ENCODE measurements at regions of chr1 and their contacts with region 1.

Region 1: DNA sequence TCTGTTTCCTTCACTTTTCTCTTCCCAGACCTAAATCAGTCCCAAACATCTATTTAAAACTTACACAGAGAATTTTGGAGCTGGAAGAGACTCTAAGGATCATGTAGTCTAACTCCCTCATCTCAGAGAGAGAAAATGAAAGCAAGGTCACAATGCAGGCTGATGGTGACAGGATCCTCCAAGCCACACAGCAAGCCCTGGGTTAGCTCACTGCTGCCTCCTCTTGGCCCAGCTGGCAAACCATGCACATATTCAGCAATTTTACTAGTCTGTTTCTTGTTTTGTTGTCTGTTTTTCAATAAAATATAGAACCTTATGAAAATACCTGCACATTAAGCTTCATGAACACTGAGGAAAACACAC is 27.7 kb upstream of the LY9 start:
- DNase-seq: peak; percentile 94
- ATAC-seq: peak; percentile 80
- H3K4me3 Mint-ChIP-seq: peak overlapping the region; percentile 78
- H3K27ac Mint-ChIP-seq: peak overlapping the region; percentile 92
- H3K4me1 Mint-ChIP-seq: peaks cover 51% of the 10 kb centered on the region
- H3K27me3 Mint-ChIP-seq: no peaks in the 10 kb centered on the region
- CTCF ChIP-seq: peak; percentile 89

Region 2: DNA sequence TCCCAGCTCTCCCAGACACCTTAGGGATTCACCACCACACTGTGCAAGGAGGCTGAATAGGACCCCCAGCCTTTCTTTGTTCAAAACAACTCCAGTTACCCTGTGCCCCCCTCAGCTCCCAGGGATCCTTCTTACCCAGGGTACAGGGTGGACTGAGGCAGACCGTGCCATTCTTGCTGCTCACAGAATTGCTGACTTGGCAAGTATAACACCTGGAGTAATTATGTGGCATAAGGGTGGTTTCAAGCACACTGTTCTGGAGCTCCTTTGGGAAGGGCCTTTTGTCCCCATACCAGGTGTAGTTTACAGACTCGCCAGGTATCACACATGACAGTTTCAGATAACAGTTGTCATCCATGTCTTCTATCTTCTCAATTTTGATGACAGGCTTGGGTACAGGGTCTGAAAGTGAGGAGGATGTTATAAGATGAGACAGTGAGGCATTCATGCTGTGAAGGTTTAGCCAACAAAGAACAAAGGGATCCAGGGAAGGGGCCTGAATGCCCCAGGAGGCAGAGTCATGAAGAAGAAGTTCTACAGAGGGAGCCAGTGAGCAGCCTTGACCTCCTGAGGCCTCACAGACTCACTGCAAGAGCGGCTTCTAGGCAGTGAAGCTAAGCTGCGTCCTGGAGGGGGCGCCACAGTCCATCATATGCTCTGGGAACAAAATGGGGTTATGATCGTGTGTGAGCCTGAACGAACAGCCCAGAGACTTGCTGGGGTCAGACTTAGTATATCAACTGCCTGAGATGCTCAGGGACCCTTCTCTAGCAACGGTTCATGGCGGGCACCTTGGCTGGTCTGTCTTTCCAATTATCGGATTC is 87.0 kb before region 1 on chr1:
- CTCF ChIA-PET with region 1: interaction called, 42 read pairs
- POLR2A ChIA-PET with region 1: interaction called, 4 read pairs
- intact Hi-C with region 1: loop called (anchors 2 kb)
- DNase-seq: peak; percentile 96
- ATAC-seq: peak; percentile 74
- H3K4me3 Mint-ChIP-seq: no peak overlapping the region
- H3K27ac Mint-ChIP-seq: peak overlapping the region; percentile 95
- H3K4me1 Mint-ChIP-seq: peaks cover 67% of the 10 kb centered on the region
- H3K27me3 Mint-ChIP-seq: no peaks in the 10 kb centered on the region
- CTCF ChIP-seq: peak; percentile 97

Region 3: DNA sequence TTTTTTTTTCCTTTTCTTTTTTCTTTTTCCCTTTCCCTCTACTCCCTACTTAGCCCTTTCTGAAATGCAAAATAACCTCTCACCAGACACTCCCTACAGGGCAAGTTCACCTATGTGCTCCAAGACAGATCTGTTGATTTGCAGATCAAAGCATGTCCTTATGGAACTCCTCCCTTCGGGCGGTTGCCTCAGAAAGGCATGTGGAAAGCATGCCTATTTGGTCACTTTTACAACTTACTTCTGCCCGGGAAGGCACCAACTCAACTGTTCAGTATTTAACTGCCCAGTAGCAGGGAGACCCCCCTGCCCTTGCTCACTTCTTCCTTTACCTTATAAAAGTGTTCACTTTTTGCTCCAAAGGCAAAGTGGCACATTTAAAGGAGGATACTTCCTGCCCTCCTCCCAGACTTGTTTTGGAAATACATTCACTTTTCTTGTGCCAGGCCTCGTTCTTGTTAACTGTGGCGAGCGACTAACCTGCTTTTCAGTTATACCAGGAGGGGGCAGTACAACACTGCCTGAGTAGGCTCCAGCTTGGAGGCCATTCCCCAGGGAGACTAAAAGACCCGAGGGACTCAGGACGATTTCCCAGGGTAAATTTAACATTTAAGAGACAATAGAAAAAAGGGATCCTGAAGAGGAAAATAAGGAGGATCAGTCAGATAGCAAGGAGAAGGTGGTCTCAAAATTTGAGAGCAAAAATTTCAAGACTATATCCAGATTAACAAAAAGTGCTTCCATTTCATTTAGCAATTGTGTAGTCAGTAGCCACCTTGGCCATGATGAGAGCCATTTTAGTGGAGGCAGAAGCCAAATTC is 41.6 kb before region 1 on chr1:
- CTCF ChIA-PET with region 1: interaction called, 217 read pairs
- POLR2A ChIA-PET with region 1: interaction called, 9 read pairs
- intact Hi-C with region 1: loop called (anchors 1 kb)
- DNase-seq: peak; percentile 74
- ATAC-seq: peak; percentile 79
- H3K4me3 Mint-ChIP-seq: no peak overlapping the region
- H3K27ac Mint-ChIP-seq: no peak overlapping the region
- H3K4me1 Mint-ChIP-seq: peaks cover 32% of the 10 kb centered on the region
- H3K27me3 Mint-ChIP-seq: no peaks in the 10 kb centered on the region
- CTCF ChIP-seq: peak; percentile 99

Region 4: DNA sequence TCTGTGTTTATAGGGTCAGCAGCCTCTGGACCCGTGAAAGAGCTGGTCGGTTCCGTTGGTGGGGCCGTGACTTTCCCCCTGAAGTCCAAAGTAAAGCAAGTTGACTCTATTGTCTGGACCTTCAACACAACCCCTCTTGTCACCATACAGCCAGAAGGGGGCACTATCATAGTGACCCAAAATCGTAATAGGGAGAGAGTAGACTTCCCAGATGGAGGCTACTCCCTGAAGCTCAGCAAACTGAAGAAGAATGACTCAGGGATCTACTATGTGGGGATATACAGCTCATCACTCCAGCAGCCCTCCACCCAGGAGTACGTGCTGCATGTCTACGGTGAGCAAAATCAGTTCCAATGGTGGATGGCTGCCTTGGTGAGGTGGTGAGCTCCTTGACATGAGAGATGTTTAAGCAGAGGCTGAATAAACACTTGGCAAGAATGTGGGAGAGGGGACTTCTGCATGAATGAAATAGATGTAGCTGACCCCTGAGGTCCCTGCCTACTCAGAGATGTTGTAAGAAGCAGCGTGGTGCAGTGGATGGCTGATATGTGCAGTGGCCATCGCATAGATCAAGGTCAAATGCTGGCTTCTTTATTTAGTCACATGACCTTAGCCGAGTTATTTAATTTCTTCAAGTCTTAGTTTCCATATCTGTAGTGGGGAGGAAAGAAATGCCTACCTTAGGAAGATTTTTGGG is 19.9 kb before region 1 on chr1:
- CTCF ChIA-PET with region 1: interaction called, 88 read pairs
- POLR2A ChIA-PET with region 1: interaction called, 6 read pairs
- intact Hi-C with region 1: loop called (anchors 1 kb)
- DNase-seq: no peak
- ATAC-seq: no peak
- H3K4me3 Mint-ChIP-seq: no peak overlapping the region
- H3K27ac Mint-ChIP-seq: peak overlapping the region; percentile 94
- H3K4me1 Mint-ChIP-seq: peaks cover 95% of the 10 kb centered on the region
- H3K27me3 Mint-ChIP-seq: no peaks in the 10 kb centered on the region
- CTCF ChIP-seq: peak; percentile 43

Region 5: DNA sequence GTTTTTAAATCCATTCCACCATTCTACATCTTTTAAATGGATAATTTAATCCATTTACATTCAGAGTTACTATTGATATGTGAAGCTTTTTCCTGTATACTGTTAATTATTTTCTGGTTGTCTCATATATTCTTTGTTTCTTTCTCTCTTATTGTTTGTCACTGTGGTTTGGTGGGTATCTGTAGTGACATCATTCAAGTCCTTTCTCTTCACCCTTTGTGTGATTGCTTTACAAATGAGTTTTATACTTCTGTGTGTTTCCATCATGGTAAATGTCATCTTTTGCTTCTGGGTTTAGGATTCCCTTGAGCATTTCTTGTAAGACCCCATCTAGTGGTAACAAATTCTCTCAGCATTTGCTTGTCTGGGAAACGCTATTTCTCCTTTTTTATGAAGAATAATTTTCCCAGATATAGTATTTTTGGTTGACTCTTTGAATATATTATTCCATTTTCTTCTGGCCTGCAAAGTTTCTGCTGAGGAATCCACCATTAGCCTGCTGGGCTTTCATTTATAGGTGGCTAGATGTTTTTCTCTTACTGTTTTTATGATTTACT is 37.9 kb after region 1 on chr1:
- CTCF ChIA-PET with region 1: interaction called, 11 read pairs
- POLR2A ChIA-PET with region 1: interaction called, 5 read pairs
- intact Hi-C with region 1: no loop called
- DNase-seq: no peak
- ATAC-seq: peak; percentile 45
- H3K4me3 Mint-ChIP-seq: no peak overlapping the region
- H3K27ac Mint-ChIP-seq: peak overlapping the region; percentile 82
- H3K4me1 Mint-ChIP-seq: peaks cover 83% of the 10 kb centered on the region
- H3K27me3 Mint-ChIP-seq: no peaks in the 10 kb centered on the region
- CTCF ChIP-seq: peak; percentile 46

Measured in activated CD8-positive, alpha-beta T cell treated with anti-CD3 and anti-CD28 coated beads for 36 hours (primary cell).